ENCODE measurements at regions of chr10 and their contacts with region 1.

Region 1: DNA sequence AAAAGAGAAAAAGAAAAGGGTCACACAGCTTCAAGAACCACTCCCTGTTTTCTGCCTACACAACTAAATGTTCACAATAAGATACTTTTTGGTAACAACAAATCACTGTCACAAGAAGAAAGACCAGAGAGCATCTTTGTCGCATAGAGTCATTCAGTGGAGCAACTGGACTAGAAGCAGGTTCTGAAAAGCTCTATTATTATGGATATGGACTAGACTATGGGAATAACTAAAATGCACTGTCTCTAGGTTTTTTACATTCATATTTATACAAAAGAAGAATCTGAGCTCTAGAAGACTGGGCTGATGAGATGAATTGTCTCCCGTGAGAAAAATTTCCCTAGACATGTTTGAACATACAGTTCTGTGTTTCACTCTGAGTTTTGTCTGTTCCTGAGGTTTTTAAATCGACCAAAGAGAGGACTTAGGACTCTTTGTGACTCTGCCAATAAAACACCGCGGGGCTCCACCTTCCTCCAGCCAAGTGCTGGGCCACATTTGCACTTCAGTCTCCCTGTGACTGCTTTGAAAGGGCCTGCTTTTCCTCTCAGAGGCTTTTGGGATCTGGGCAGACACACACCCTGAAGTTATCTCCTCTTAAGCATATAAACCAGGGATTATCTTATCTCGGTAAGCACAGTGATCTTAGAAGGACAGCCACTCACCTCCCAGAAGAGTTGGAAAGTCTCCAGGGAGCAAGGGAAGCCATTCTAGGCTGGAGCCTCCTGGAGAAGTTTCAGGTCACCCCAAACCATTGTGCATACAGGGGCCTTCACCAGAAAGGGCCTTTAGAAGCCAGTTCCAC is 101.0 kb upstream of the JCAD start:
- DNase-seq: no peak
- ATAC-seq: peak in 1 of 4 donors; percentile 22
- H3K4me3 ChIP-seq: no peak overlapping the region
- H3K27ac ChIP-seq: no peak overlapping the region
- H3K4me1 ChIP-seq: no peaks in the 10 kb centered on the region
- H3K27me3 ChIP-seq: no peaks in the 10 kb centered on the region
- CTCF ChIP-seq: no peak

Region 2: DNA sequence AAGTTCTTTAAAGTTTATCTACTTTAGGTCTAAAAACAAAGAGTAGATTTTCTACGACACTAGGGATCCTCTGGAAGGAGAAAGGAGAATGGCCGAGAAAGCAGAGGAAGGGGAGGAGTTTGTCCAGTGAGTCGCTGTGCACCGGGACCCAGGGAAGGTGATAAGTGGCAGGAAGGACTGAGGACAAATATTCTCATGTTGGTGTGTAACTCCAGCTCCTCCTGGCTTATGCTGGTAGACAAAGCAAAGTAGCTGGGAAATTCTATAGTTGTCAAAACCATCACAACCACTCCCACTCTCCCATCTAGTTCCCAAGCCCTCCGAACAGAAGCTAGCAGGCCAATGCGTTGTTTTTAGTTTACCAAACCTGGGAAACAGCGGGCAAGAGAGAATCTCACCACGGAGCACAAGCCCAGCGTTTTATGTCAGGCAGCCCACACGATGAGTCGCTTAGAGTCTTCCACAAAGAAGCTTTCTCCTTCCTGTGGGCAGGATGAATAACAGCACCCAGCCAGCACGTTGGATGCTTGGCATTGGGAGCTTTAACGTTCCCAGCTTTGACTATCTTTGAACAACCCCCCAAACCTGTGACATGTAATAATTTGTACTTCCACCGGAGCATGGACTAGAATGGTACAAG is 68.1 kb before region 1 on chr10:
- intact Hi-C with region 1: no loop called
- DNase-seq: no peak
- ATAC-seq: no peak
- H3K4me3 ChIP-seq: no peak overlapping the region
- H3K27ac ChIP-seq: no peak overlapping the region
- H3K4me1 ChIP-seq: no peaks in the 10 kb centered on the region
- H3K27me3 ChIP-seq: no peaks in the 10 kb centered on the region
- CTCF ChIP-seq: no peak

Region 3: DNA sequence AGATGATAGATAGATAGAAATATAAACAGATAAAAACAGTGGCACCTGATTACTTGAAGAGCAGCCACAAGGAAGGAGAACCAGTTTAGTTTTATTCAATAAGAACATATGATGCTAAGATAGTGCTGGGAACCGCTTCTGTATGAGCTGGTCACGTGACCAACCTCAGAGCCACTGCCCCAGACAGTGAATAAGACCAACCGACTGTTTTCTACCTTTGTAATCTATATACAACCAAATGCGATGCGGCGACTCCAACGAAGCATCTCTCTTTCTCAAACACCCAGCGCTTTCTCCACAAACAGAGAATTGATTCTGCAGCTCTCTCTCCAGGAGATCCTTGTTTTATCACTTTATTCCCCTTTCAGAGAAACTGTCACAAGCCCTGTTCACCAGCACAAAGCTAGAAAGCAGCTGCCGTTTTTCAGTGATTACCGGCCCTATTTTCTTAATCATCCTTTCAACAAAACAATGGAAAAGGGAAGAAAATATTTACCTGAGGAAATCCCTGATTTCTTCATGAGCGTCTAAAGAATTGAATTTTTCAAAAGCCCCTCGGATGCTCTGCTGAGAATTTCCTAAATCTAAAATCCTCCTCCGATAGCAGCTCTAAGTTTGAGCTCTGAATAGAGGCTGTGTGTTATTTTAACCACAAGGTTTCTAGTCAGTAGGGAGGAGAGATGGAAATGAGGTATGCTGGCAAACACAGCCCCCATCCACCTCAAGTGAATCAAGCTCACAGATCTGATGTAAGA is 45.3 kb before region 1 on chr10:
- intact Hi-C with region 1: loop called in 1 of 3 experiments (anchors 10 kb)
- DNase-seq: no peak
- ATAC-seq: no peak
- H3K4me3 ChIP-seq: no peak overlapping the region
- H3K27ac ChIP-seq: no peak overlapping the region
- H3K4me1 ChIP-seq: no peaks in the 10 kb centered on the region
- H3K27me3 ChIP-seq: peaks cover 0 to 5% (median 0%) of the 10 kb centered on the region in 4 donors
- CTCF ChIP-seq: no peak